ENCODE measurements at regions of chr5 and their contacts with region 1.

Region 1: DNA sequence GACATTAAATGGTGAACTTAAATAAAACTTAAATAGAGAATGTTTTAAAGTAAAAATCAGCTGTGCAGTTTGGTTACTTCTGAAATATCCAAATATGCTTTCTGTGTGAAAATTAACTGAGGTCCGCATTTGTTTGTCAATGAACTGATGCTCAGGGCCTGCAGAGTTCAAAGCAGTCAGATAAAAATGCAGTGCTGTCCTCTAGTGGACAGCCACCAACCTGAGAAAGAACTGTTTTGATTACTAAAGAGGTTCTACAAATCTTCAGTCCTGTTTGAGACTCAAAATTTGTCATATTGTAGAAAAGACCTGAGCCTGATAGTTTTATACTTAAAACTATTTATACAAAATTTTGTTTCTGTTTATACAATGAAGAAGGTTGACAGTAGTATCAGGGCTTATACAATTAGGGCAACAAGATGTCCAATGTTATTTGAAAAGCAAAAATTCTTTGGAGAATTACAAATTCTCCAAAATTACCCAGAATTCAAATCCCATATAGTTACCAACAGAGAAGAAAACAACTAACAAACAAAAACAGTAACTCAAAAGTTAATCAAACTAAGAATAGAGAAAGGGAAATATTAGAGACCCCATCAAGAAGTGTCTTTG is 232.3 kb upstream of the TBCA start:
- DNase-seq: peak; percentile 19
- H3K4me3 ChIP-seq: no peak overlapping the region
- H3K27ac ChIP-seq: no peak overlapping the region
- H3K4me1 ChIP-seq: no peaks in the 10 kb centered on the region
- H3K27me3 ChIP-seq: no peaks in the 10 kb centered on the region
- CTCF ChIP-seq: peak; percentile 88 to 93

Region 2: DNA sequence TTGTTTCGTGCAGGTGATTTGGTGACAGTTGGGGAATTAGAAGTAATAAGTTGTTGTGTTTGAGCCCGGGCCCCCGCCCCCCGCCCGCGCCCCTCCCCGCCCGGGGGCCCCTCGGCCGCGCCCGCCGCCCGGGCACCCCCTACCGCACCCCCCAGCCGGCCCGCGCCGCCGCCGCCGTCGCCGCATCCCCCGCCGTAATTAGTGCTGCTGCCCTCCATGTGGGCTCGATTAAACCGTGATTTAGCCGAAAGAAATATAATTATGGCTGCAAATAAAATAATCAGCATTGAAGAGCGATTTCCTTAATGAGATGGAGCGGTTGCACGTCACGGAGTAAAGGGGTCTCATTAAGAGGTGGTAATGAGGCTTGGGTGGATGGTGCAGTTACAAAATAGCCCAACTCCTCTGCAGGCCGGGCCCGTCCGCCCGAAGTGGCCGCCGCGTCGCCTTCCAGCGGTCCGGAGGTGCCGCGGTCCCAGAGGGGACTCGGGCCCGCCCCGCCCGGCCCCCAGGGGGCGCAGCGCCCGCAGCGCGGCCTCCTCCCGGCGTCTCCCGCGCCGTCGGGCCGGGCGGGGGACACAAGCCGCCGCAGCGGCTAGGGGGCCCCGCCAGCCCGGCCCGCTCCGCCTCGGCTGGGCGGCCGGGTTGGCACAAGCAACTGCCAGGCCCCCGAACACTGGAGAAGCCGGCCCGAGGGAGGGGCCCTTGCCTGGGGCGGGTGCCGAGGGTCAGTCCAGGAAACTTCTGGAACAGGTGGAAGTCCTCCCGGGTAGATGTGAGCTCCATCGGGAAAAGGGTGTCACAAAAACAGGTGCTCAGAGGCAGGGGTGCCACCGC is 363.1 kb before region 1 on chr5:
- CTCF ChIA-PET with region 1: no interaction called
- dilution Hi-C with region 1: no loop called
- in situ Hi-C with region 1: no loop called
- intact Hi-C with region 1: loop called (anchors 10 kb)
- DNase-seq: no peak
- H3K4me3 ChIP-seq: no peak overlapping the region
- H3K27ac ChIP-seq: no peak overlapping the region
- H3K4me1 ChIP-seq: no peaks in the 10 kb centered on the region
- H3K27me3 ChIP-seq: peaks cover 62% of the 10 kb centered on the region
- CTCF ChIP-seq: peak in 1 of 2 donors; percentile 3

Region 3: DNA sequence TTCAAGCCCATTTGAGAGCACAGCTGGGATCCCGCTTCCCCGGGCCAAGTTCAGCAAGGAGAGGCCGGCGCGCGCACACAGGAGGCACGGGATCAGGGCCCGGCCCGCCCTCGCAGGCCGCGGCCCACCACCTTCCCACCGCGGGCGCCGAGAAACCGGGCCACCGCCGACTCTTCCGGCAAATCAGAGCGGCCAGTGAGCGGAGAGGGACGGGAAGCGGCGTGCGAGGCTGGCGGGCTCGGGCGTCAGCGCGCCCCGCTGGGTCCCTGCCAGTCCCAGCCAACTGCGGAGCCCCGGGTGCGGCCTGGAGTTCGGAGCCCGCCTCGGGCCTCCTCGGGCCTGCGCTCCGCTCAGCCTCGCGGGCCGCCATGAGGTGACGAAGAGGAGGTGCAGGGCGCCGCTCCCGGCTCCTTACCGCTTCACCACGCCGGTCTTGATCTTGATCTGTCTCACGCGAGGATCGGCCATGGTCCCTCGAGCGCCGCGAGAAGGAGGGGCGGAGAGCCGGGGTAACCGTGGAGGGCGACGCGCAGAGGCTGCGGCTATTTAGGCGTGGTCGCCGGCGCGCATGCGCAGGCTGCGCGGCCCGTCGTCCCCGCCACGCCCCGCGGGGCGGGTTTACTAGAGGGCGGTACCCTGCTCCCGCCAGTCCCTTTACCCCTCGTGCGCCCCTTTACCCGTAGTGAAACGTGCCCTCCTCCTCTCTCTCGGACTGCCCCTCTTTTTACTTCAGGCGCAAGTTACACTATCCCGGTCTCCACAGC is 232.5 kb before region 1 on chr5 and contains the start of gene TBCA:
- CTCF ChIA-PET with region 1: no interaction called
- dilution Hi-C with region 1: no loop called
- in situ Hi-C with region 1: no loop called
- intact Hi-C with region 1: loop called (anchors 10 kb)
- DNase-seq: peak; percentile 88
- H3K4me3 ChIP-seq: peak within 1 kb of the TSS; percentile 77 to 88 (median 79)
- H3K27ac ChIP-seq: peak within 1 kb of the TSS; percentile 89
- H3K4me1 ChIP-seq: peaks cover 23% of the 10 kb centered on the region
- H3K27me3 ChIP-seq: no peaks in the 10 kb centered on the region
- CTCF ChIP-seq: peak in 1 of 2 donors; percentile 34
- total RNA-seq, gene TBCA: 69.7 to 210 TPM

Region 4: GRCh38 chr5:77867194-77867691 is 141.2 kb before region 1 on chr5:
- CTCF ChIA-PET with region 1: no interaction called
- dilution Hi-C with region 1: no loop called
- in situ Hi-C with region 1: no loop called
- intact Hi-C with region 1: loop called (anchors 1 kb)
- DNase-seq: no peak
- H3K4me3 ChIP-seq: no peak overlapping the region
- H3K27ac ChIP-seq: no peak overlapping the region
- H3K4me1 ChIP-seq: no peaks in the 10 kb centered on the region
- H3K27me3 ChIP-seq: no peaks in the 10 kb centered on the region
- CTCF ChIP-seq: peak in 1 of 2 donors; percentile 17

Region 5: GRCh38 chr5:77920359-77921058 is 88.0 kb before region 1 on chr5:
- CTCF ChIA-PET with region 1: no interaction called
- dilution Hi-C with region 1: no loop called
- in situ Hi-C with region 1: no loop called
- intact Hi-C with region 1: no loop called
- DNase-seq: no peak
- H3K4me3 ChIP-seq: no peak overlapping the region
- H3K27ac ChIP-seq: no peak overlapping the region
- H3K4me1 ChIP-seq: peaks cover 15% of the 10 kb centered on the region
- H3K27me3 ChIP-seq: no peaks in the 10 kb centered on the region
- CTCF ChIP-seq: no peak

Region 6: DNA sequence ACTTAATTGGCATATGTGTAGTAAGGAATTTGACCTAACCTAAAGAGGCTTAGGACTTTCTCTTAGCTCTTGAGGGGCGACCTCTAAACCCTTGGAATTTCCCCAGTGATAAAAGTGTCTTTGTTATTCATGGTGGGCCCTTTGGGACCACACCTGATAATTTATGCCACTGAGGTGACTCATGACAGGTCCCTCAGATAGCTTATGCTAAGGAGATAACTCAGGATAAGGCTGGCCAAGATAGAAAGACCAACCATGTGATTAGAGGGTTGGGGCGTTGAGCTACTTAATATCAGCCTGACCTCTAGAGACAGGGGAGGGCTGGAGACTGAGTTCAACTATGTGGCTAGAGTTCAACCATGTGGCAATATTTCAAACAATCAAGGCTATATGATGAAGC is 67.9 kb after region 1 on chr5:
- CTCF ChIA-PET with region 1: no interaction called
- dilution Hi-C with region 1: no loop called
- in situ Hi-C with region 1: no loop called
- intact Hi-C with region 1: no loop called
- DNase-seq: no peak
- H3K4me3 ChIP-seq: no peak overlapping the region
- H3K27ac ChIP-seq: no peak overlapping the region
- H3K4me1 ChIP-seq: no peaks in the 10 kb centered on the region
- H3K27me3 ChIP-seq: no peaks in the 10 kb centered on the region
- CTCF ChIP-seq: no peak